CD4-positive, alpha-beta memory T cell (primary cell): ENCODE measurements at regions of chr3 and their contacts with region 1.

Region 1: GRCh38 chr3:56988458-56989168 is 71.9 kb upstream of the SPATA12 start:
- DNase-seq: peak; percentile 53 to 67 (median 61)
- H3K4me3 ChIP-seq: no peak overlapping the region
- H3K4me3 Mint-ChIP-seq: peak overlapping the region in 1 of 8 donors; percentile 18
- H3K27ac ChIP-seq: no peak overlapping the region
- H3K27ac Mint-ChIP-seq: peak overlapping the region in 3 of 7 donors; percentile 14 to 32 (median 15)
- H3K4me1 ChIP-seq: peaks cover 9% of the 10 kb centered on the region
- H3K4me1 Mint-ChIP-seq: peaks cover 9 to 28% (median 17%) of the 10 kb centered on the region in 4 donors
- H3K27me3 ChIP-seq: no peaks in the 10 kb centered on the region
- H3K27me3 Mint-ChIP-seq: peaks cover 7 to 9% of the 10 kb centered on the region in 2 donors

Region 2: DNA sequence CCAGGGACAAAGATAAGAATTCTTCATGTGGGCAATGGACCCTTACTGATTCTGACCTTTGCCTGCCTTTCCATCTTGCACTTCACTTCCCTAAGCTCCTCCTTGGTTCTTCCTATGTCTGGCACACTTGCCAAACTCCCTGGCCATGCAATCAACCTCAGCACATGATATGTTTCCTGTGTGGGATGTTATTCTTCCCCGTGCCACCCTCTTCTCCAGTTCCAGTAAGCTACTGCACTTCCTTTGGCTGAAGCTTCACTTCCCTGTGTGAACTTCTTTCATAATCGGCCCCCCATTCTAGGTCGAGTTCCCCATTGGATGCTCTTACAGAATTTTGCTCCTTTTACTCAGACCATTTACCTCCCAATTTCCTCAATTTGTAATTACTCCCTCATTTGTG is 294.9 kb before region 1 on chr3:
- CTCF ChIA-PET with region 1: interaction called, 321 read pairs
- POLR2A ChIA-PET with region 1: interaction called, 3 read pairs
- intact Hi-C with region 1: no loop called
- DNase-seq: no peak
- H3K4me3 ChIP-seq: no peak overlapping the region
- H3K4me3 Mint-ChIP-seq: peak overlapping the region in 7 of 8 donors; percentile 37 to 86 (median 80)
- H3K27ac ChIP-seq: no peak overlapping the region
- H3K27ac Mint-ChIP-seq: peak overlapping the region in 6 of 7 donors; percentile 3 to 86 (median 70)
- H3K4me1 ChIP-seq: peaks cover 38% of the 10 kb centered on the region
- H3K4me1 Mint-ChIP-seq: peaks cover 36 to 46% (median 41%) of the 10 kb centered on the region in 4 donors
- H3K27me3 ChIP-seq: no peaks in the 10 kb centered on the region
- H3K27me3 Mint-ChIP-seq: no peaks in the 10 kb centered on the region

Region 3: DNA sequence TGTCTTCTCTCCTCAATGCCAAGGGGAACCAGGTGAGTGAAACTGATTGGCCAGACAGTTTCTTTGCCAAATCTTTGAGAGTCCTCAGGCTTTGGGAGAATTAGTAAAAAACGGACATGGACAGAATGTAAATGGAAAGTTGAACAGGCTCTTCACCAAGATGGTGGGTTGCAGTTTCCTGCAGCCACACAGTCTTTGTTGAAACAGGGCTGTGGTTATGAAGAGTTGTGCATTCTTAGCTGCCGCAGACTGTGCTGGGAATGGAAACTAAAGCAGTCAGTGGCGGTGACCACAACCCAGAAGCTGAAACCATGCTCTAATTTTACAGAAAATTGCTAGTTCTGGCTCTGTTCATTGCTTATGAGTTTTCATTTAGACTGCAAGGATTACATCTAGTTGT is 263.4 kb before region 1 on chr3:
- CTCF ChIA-PET with region 1: interaction called, 10 read pairs
- POLR2A ChIA-PET with region 1: no interaction called
- intact Hi-C with region 1: no loop called
- DNase-seq: peak; percentile 48 to 71 (median 65)
- H3K4me3 ChIP-seq: no peak overlapping the region
- H3K4me3 Mint-ChIP-seq: peak overlapping the region; percentile 37 to 92 (median 70)
- H3K27ac ChIP-seq: peak overlapping the region; percentile 4
- H3K27ac Mint-ChIP-seq: peak overlapping the region; percentile 25 to 96 (median 79)
- H3K4me1 ChIP-seq: peaks cover 27% of the 10 kb centered on the region
- H3K4me1 Mint-ChIP-seq: peaks cover 30 to 62% (median 46%) of the 10 kb centered on the region in 4 donors
- H3K27me3 ChIP-seq: no peaks in the 10 kb centered on the region
- H3K27me3 Mint-ChIP-seq: no peaks in the 10 kb centered on the region

Region 4: GRCh38 chr3:56753206-56753820 is 235.3 kb before region 1 on chr3:
- CTCF ChIA-PET with region 1: interaction called, 16 read pairs
- POLR2A ChIA-PET with region 1: no interaction called
- intact Hi-C with region 1: no loop called
- DNase-seq: peak in 1 of 5 donors; percentile 33
- H3K4me3 ChIP-seq: no peak overlapping the region
- H3K4me3 Mint-ChIP-seq: peak overlapping the region in 6 of 8 donors; percentile 1 to 96 (median 76)
- H3K27ac ChIP-seq: peak overlapping the region; percentile 22
- H3K27ac Mint-ChIP-seq: peak overlapping the region; percentile 42 to 97 (median 76)
- H3K4me1 ChIP-seq: peaks cover 62% of the 10 kb centered on the region
- H3K4me1 Mint-ChIP-seq: peaks cover 43 to 68% (median 54%) of the 10 kb centered on the region in 4 donors
- H3K27me3 ChIP-seq: no peaks in the 10 kb centered on the region
- H3K27me3 Mint-ChIP-seq: no peaks in the 10 kb centered on the region

Region 5: GRCh38 chr3:56783644-56784447 is 204.8 kb before region 1 on chr3:
- CTCF ChIA-PET with region 1: interaction called, 23 read pairs
- POLR2A ChIA-PET with region 1: interaction called, 3 read pairs
- intact Hi-C with region 1: no loop called
- DNase-seq: peak; percentile 80 to 90 (median 84)
- H3K4me3 ChIP-seq: peak overlapping the region; percentile 26 to 45
- H3K4me3 Mint-ChIP-seq: peak overlapping the region; percentile 73 to 87 (median 84)
- H3K27ac ChIP-seq: peak overlapping the region; percentile 69
- H3K27ac Mint-ChIP-seq: peak overlapping the region; percentile 85 to 97 (median 94)
- H3K4me1 ChIP-seq: peaks cover 100% of the 10 kb centered on the region
- H3K4me1 Mint-ChIP-seq: peaks cover 85 to 100% (median 94%) of the 10 kb centered on the region in 4 donors
- H3K27me3 ChIP-seq: no peaks in the 10 kb centered on the region
- H3K27me3 Mint-ChIP-seq: no peaks in the 10 kb centered on the region

Region 6: DNA sequence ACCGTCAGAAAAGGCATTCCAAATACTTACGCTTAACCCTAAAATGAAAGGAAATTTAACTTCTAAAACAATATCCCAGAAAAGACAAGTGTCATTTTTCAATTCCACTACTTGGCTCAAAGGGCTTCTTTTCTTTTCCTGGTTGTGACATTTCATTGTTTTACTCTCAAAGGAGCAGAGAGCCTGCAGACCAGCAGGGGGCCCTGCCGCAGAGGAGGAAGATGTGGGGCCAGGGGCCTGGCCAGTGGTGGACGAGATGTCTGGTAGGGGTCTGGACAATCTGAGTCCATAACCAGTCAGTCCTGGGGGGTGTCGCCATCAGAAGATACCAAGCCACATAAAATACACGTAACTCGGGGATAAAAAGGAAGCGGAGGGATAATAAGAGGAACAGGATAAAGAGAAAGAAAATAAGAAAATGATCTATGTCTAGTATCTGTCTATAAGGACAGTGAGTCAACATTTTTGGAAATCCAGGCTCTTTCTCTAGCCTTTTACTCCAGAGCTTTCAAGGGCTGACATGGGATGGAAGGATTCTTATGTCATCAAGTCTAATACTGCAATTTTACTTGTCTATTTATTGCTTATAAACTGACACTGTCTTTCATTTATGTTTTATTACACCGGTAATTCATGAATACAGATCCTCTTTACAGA is 132.6 kb before region 1 on chr3:
- CTCF ChIA-PET with region 1: interaction called, 21 read pairs
- POLR2A ChIA-PET with region 1: no interaction called
- intact Hi-C with region 1: loop called (anchors 1 kb)
- DNase-seq: peak in 1 of 5 donors; percentile 17
- H3K4me3 ChIP-seq: no peak overlapping the region
- H3K4me3 Mint-ChIP-seq: peak overlapping the region in 2 of 8 donors; percentile 11 to 58
- H3K27ac ChIP-seq: no peak overlapping the region
- H3K27ac Mint-ChIP-seq: peak overlapping the region in 6 of 7 donors; percentile 10 to 79 (median 56)
- H3K4me1 ChIP-seq: peaks cover 39% of the 10 kb centered on the region
- H3K4me1 Mint-ChIP-seq: peaks cover 48 to 80% (median 61%) of the 10 kb centered on the region in 4 donors
- H3K27me3 ChIP-seq: no peaks in the 10 kb centered on the region
- H3K27me3 Mint-ChIP-seq: no peaks in the 10 kb centered on the region

Region 7: DNA sequence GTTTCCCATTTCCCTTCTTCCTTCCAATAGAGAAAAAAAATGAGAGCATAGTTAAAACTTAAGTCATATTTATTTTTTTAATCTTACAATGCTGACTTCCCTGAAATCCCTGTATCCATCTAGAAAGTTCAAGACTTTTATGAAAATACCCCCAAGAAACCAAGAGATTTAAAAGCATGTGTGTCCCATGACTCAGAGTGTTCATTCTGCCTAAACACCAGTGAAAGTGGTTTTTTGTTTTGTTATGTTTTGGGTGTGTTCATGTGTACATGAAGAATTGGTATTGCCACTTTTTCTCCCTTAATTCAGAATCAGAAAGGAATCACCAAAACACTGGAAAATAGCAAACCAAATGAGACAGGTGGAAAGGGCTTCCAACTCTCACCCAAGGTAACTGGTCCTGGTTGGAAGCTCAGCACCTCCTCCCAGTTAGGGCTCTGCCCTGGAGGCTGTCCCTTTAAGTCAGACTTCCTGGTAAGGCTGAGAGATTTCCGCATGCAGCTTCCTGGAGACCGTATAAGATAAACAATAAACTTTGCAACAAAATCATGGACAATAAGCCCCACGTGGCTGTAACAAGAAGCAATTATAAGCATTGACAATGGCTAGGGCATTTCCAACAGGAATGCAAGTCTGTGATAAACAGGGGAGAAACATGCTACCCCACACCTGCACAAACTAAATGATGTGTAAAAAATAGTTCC is 64.9 kb before region 1 on chr3:
- CTCF ChIA-PET with region 1: interaction called, 13 read pairs
- POLR2A ChIA-PET with region 1: interaction called, 3 read pairs
- intact Hi-C with region 1: no loop called
- DNase-seq: peak; percentile 79 to 86 (median 81)
- H3K4me3 ChIP-seq: peak overlapping the region in 1 of 2 donors; percentile 19
- H3K4me3 Mint-ChIP-seq: peak overlapping the region; percentile 45 to 81 (median 76)
- H3K27ac ChIP-seq: peak overlapping the region; percentile 79
- H3K27ac Mint-ChIP-seq: peak overlapping the region; percentile 97 to 100 (median 100)
- H3K4me1 ChIP-seq: peaks cover 96% of the 10 kb centered on the region
- H3K4me1 Mint-ChIP-seq: peaks cover 66 to 87% (median 80%) of the 10 kb centered on the region in 4 donors
- H3K27me3 ChIP-seq: no peaks in the 10 kb centered on the region
- H3K27me3 Mint-ChIP-seq: no peaks in the 10 kb centered on the region